GM12878 (cell line): ENCODE measurements at regions of chr5 and their contacts with region 1.

Region 1: DNA sequence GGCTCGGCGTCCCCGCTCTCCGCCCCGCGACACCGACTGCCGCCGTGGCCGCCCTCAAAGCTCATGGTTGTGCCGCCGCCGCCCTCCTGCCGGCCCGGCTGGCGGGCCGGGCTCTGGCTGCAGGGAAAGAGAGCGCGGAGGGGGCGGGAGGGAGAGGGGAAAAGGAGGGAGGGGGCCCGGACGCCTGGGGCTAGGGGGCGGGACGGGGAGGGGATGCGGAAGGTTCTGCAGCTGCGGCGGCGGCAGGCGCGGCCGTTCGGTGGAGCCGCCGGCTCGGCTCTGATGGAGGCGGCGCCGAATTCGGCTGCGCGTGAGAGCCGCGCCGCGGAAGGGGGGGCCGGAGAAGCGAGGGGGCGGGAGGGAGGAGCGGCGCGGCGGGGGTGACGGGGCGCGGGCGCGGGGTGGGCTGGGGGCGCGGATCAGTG is at the start of gene MARCHF11:
- DNase-seq: no peak
- ATAC-seq: no peak
- H3K4me3 ChIP-seq: no peak within 1 kb of the TSS
- H3K27ac ChIP-seq: no peak within 1 kb of the TSS
- H3K4me1 ChIP-seq: no peaks in the 10 kb centered on the region
- H3K27me3 ChIP-seq: no peaks in the 10 kb centered on the region; a peak in 1 of 4 replicates
- CTCF ChIP-seq: no peak
- EP300 ChIP-seq: no peak
- POLR2A ChIP-seq: no peak
- RAD21 ChIP-seq: no peak
- polyA plus RNA-seq, gene MARCHF11: not detected

Region 2: DNA sequence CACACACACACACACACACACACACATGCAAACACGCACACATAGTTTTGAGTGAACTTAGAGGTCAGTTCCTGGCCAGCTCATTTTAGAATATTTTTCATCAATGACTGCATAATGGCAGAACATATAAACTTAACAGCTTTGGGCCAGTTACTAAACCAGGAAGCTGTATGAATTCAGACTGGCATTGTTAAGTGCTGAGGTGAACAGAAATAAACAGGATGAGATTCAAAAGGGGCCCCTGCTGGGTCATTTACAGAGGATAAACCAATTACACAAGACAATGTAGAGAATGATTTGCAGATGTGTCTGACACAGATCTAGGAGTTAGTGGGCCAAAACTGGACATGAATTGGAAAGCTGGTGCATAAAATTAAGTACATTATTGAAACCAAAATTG is 44.5 kb before region 1 on chr5:
- CTCF ChIA-PET with region 1: no interaction called
- POLR2A ChIA-PET with region 1: no interaction called
- RAD21 ChIA-PET with region 1: no interaction called
- SMC1A ChIA-PET with region 1: no interaction called
- in situ Hi-C with region 1: no loop called
- intact Hi-C with region 1: no loop called
- DNase-seq: no peak
- ATAC-seq: no peak
- H3K4me3 ChIP-seq: no peak overlapping the region
- H3K27ac ChIP-seq: no peak overlapping the region
- H3K4me1 ChIP-seq: no peaks in the 10 kb centered on the region
- H3K27me3 ChIP-seq: no peaks in the 10 kb centered on the region
- CTCF ChIP-seq: no peak
- EP300 ChIP-seq: no peak
- POLR2A ChIP-seq: no peak
- RAD21 ChIP-seq: no peak

Region 3: GRCh38 chr5:16160706-16161105 is 18.8 kb before region 1 on chr5:
- CTCF ChIA-PET with region 1: interaction called, 10 read pairs
- POLR2A ChIA-PET with region 1: no interaction called
- RAD21 ChIA-PET with region 1: no interaction called
- SMC1A ChIA-PET with region 1: interaction called, 6 read pairs
- in situ Hi-C with region 1: no loop called
- intact Hi-C with region 1: no loop called
- DNase-seq: peak; percentile 2
- ATAC-seq: peak; percentile 96
- H3K4me3 ChIP-seq: no peak overlapping the region
- H3K27ac ChIP-seq: no peak overlapping the region
- H3K4me1 ChIP-seq: no peaks in the 10 kb centered on the region
- H3K27me3 ChIP-seq: no peaks in the 10 kb centered on the region
- CTCF ChIP-seq: peak; percentile 66 to 70 (median 68)
- EP300 ChIP-seq: no peak
- POLR2A ChIP-seq: no peak
- RAD21 ChIP-seq: peak; percentile 83

Region 4: DNA sequence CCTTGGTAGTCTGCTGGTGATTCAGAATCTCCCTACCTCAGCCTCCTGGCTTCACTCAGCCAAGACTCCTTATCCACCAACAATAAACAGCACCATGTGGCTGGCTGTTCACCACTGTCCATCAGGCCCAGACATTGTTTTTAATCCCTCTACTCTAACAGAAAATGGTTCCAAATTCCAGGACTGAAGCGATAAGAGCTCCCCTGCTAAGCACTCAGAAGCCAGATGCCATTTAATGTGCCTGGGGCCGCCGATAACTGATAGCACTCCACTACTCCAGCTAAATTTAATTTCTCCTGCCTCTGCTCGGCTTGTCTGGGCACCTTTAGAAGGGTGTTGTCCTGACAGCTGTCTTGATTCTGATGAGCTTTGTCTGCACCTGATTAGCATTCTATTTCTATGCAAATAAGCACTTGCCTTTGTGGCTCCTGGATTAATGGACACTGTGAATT is 239.0 kb after region 1 on chr5:
- CTCF ChIA-PET with region 1: no interaction called
- POLR2A ChIA-PET with region 1: no interaction called
- RAD21 ChIA-PET with region 1: no interaction called
- SMC1A ChIA-PET with region 1: no interaction called
- in situ Hi-C with region 1: no loop called
- intact Hi-C with region 1: no loop called
- DNase-seq: no peak
- ATAC-seq: no peak
- H3K4me3 ChIP-seq: no peak overlapping the region
- H3K27ac ChIP-seq: no peak overlapping the region
- H3K4me1 ChIP-seq: no peaks in the 10 kb centered on the region
- H3K27me3 ChIP-seq: no peaks in the 10 kb centered on the region
- CTCF ChIP-seq: no peak
- EP300 ChIP-seq: no peak
- POLR2A ChIP-seq: no peak
- RAD21 ChIP-seq: no peak